Activated T-helper 1 cell treated with anti-CD3 and anti-CD28 coated beads, Interleukin-12 subunit alpha, Interleukin-12 subunit beta, Interleukin-2, Interleukin-4 antibody, amounts not matched to agents 30 ng/mL and 10 ng/mL and 1 ng/mL, durations not matched to agents 14 hours and 24 hours and 36 hours (primary cell): ENCODE measurements at regions of chr6 and their contacts with region 1.

Region 1: GRCh38 chr6:20564269-20564668 is 30.0 kb downstream of the CDKAL1 start:
- DNase-seq: no peak
- H3K4me3 Mint-ChIP-seq: no peak overlapping the region
- H3K27ac Mint-ChIP-seq: no peak overlapping the region
- H3K4me1 Mint-ChIP-seq: peaks cover 23% of the 10 kb centered on the region
- H3K27me3 Mint-ChIP-seq: no peaks in the 10 kb centered on the region

Region 2: GRCh38 chr6:20669571-20670314 is 105.5 kb after region 1 on chr6:
- intact Hi-C with region 1: no loop called
- DNase-seq: no peak
- H3K4me3 Mint-ChIP-seq: no peak overlapping the region
- H3K27ac Mint-ChIP-seq: no peak overlapping the region
- H3K4me1 Mint-ChIP-seq: peaks cover 16% of the 10 kb centered on the region
- H3K27me3 Mint-ChIP-seq: no peaks in the 10 kb centered on the region

Region 3: DNA sequence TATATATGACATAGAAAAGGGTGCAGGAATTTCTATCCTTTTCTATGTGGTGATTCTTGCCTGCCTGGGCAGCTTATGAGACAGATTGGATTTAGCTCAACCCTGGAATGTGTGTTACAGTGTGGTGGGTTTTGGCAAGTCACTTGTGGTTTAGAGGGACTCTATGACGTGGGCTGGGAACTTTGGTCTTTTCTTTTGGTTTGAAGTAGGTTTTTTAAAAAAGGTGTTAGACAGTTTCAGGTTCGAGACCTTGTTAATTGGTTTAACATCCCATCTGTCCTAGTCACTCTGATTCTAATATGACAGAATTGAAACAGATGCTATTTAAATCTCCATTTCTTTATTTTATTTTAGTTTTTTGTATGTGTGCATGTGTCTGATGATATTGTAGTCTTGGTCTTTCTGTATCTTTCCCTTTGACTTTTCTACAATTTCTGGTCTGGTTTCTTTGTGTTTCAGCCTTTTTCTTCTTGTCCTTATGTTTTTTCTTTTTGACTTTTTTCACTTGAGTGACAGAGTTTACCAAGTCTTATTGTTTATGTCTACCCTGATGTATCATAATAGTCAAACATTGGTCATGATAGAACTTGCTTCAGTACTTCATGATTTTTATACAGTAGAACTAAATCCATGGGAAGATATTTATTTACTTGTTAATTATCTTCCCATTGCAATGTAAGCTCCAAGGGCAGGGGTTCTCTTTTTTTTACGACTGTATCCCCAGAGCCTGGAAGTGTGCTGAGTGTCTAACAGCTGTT is 144.3 kb after region 1 on chr6:
- intact Hi-C with region 1: no loop called
- DNase-seq: no peak
- H3K4me3 Mint-ChIP-seq: no peak overlapping the region
- H3K27ac Mint-ChIP-seq: peak overlapping the region; percentile 75
- H3K4me1 Mint-ChIP-seq: peaks cover 43% of the 10 kb centered on the region
- H3K27me3 Mint-ChIP-seq: no peaks in the 10 kb centered on the region

Region 4: GRCh38 chr6:20846602-20847028 is 282.3 kb after region 1 on chr6:
- intact Hi-C with region 1: loop called (anchors 10 kb)
- DNase-seq: no peak
- H3K4me3 Mint-ChIP-seq: no peak overlapping the region
- H3K27ac Mint-ChIP-seq: no peak overlapping the region
- H3K4me1 Mint-ChIP-seq: peaks cover 27% of the 10 kb centered on the region
- H3K27me3 Mint-ChIP-seq: no peaks in the 10 kb centered on the region

Region 5: DNA sequence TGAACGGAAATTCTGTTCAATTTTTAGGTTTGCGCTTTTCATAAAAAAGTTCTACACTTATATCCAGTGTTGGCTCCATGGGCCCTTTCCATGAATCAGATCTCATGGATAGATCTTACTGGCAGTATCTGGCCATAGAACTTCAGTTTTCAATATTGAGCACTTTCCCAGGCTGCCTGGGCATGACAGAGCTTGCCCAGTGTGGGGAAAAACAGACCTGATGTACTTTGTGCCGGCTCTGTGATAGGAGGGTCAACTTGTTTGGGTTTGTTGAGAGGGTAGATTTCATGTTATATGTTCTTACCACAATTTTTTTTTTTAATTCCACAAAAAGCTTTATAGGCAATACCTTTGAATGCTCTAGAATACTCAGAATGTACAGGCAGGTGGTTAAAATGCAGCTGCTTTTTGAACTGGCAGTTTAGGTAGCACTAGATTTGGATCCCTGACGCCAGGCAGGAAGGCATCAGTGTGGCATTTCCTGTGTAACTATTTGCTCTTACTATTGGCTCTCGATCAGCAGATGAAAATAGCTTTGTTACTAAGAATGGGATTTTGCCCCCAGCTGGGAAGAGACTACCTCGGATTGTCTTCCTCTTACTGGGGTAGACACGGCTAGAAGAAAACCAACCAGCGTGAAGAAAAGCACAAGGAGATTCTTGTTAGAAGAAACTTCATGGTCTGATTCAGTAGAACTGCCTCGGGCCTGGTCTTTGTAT is 624.4 kb after region 1 on chr6:
- intact Hi-C with region 1: loop called (anchors 10 kb)
- DNase-seq: no peak
- H3K4me3 Mint-ChIP-seq: no peak overlapping the region
- H3K27ac Mint-ChIP-seq: no peak overlapping the region
- H3K4me1 Mint-ChIP-seq: peaks cover 30% of the 10 kb centered on the region
- H3K27me3 Mint-ChIP-seq: no peaks in the 10 kb centered on the region

Region 6: GRCh38 chr6:21935561-21936028 is 1371.3 kb after region 1 on chr6:
- intact Hi-C with region 1: loop called (anchors 5 kb)
- DNase-seq: no peak
- H3K4me3 Mint-ChIP-seq: no peak overlapping the region
- H3K27ac Mint-ChIP-seq: no peak overlapping the region
- H3K4me1 Mint-ChIP-seq: peaks cover 6% of the 10 kb centered on the region
- H3K27me3 Mint-ChIP-seq: no peaks in the 10 kb centered on the region